ENCODE measurements at regions of chr6 and their contacts with region 1.

Region 1: DNA sequence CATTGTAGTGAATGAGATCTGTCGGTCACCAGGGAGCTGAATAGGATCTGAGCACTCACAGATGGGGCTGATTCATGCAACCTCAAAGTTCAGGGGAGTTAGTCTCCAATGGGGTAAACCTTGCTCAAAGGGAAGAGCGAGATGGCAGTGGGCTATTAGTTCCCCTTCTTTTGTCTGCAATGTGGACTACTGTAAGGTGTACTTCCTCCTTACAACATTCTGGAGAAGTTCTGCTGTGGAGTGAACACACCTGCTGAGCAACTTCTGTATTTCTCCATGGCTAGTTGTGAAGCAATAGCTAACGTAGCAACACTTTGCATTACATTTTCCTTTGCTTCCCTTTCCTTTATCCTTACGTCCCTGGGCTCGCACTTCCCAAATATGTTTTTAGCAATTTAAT is 134.3 kb upstream of the B3GAT2 start:
- DNase-seq: no peak
- H3K4me3 ChIP-seq: no peak overlapping the region
- H3K27ac ChIP-seq: no peak overlapping the region
- H3K4me1 ChIP-seq: no peaks in the 10 kb centered on the region
- H3K27me3 ChIP-seq: no peaks in the 10 kb centered on the region
- CTCF ChIP-seq: no peak

Region 2: DNA sequence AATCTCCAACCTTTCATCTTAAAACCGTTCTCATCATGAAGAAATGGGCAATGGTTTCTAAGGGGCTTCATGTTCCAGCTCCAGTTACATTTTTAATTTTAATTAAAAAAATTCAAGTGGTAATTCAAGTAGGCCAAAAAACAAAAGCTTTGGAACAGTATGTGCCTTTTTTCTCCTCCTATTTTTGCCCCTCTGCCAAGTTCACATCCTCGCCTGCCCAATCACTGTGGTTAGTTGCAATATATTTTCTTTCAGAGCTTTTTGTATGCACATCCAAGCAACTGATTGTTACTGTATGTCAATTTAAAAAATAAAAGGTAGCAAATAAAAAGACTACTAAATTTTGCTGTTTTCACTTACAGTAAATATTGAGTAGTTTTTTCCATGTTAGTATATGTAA is 34.5 kb before region 1 on chr6:
- CTCF ChIA-PET with region 1: no interaction called
- dilution Hi-C with region 1: loop called (anchors 5 kb)
- in situ Hi-C with region 1: no loop called
- intact Hi-C with region 1: no loop called
- DNase-seq: no peak
- H3K4me3 ChIP-seq: no peak overlapping the region
- H3K27ac ChIP-seq: no peak overlapping the region
- H3K4me1 ChIP-seq: no peaks in the 10 kb centered on the region
- H3K27me3 ChIP-seq: no peaks in the 10 kb centered on the region
- CTCF ChIP-seq: no peak

Region 3: DNA sequence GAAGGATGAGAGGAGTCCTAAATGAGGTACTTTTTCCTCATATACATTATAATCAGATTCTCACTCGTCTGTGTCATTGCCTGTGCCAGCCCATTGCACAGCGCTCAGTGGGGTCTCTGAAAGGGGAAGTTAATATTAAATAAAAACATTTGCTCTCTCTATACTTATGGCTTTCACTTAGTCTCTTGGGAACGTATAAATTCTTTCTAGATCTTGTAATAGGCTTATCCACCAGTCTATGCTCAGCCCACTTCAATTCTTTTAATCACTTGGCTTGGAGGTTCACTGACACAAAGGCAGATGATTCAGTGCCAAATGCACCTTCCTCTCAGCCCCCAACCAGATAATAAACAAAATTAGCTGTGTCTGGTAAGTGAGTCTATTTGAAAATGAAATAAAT is 33.2 kb after region 1 on chr6:
- CTCF ChIA-PET with region 1: no interaction called
- dilution Hi-C with region 1: no loop called
- in situ Hi-C with region 1: no loop called
- intact Hi-C with region 1: no loop called
- DNase-seq: no peak
- H3K4me3 ChIP-seq: no peak overlapping the region
- H3K27ac ChIP-seq: no peak overlapping the region
- H3K4me1 ChIP-seq: peaks cover 16% of the 10 kb centered on the region
- H3K27me3 ChIP-seq: no peaks in the 10 kb centered on the region
- CTCF ChIP-seq: no peak